Esophagus squamous epithelium (tissue), 5 donors: ENCODE measurements at regions of chrX and their contacts with region 1.

Region 1: DNA sequence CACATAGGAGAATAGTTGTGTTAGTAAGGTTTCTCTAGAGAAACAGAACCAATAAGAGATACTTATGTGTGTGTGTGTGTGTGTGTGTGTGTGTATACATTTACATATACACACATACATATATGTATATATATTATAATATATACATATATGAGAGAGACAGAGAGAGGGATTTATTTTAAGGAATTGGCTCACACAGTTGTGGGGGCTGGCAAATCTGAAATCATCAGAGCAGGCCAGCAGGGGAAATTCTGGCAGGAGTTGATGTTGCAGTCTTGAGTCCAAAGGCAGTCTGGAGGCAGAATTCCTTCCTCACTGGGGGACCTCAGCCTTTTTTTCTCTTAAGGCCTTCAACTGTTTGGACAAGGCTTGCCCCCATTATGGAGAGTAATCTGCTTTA is 38.6 kb upstream of the NHS start:
- DNase-seq: no peak
- H3K4me3 ChIP-seq: no peak overlapping the region
- H3K27ac ChIP-seq: no peak overlapping the region
- H3K4me1 ChIP-seq: no peaks in the 10 kb centered on the region
- H3K27me3 ChIP-seq: no peaks in the 10 kb centered on the region
- CTCF ChIP-seq: no peak
- POLR2A ChIP-seq: no peak

Region 2: GRCh38 chrX:16931371-16931770 is 405.0 kb before region 1 on chrX:
- intact Hi-C with region 1: no loop called
- DNase-seq: no peak
- H3K4me3 ChIP-seq: no peak overlapping the region
- H3K27ac ChIP-seq: no peak overlapping the region
- H3K4me1 ChIP-seq: no peaks in the 10 kb centered on the region
- H3K27me3 ChIP-seq: peaks cover 0 to 5% (median 0%) of the 10 kb centered on the region in 4 donors
- CTCF ChIP-seq: no peak
- POLR2A ChIP-seq: no peak

Region 3: DNA sequence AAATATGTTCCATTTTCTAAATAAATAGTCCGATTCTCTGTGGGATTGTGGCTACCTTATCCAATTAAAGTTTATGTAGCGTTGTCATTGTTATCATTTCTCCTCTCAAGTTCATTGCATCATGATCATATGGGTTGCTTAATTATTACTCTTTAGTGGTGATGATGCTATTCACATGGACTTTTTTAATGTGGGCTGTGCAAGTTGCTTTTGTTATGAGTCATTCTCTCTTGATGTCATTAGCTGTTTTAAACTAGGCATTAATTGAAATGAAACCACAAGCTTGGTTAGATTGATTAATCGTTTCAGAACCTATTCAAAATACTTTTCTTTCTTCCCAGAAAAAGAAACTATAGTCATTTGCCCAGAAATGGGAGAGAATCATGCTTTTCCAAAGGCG is 76.9 kb after region 1 on chrX:
- intact Hi-C with region 1: loop called (anchors 10 kb)
- DNase-seq: no peak
- H3K4me3 ChIP-seq: no peak overlapping the region
- H3K27ac ChIP-seq: no peak overlapping the region
- H3K4me1 ChIP-seq: peaks cover 0 to 31% (median 9%) of the 10 kb centered on the region in 3 donors
- H3K27me3 ChIP-seq: no peaks in the 10 kb centered on the region
- CTCF ChIP-seq: no peak
- POLR2A ChIP-seq: no peak